ENCODE measurements at regions of chr17 and their contacts with region 1.

Region 1: DNA sequence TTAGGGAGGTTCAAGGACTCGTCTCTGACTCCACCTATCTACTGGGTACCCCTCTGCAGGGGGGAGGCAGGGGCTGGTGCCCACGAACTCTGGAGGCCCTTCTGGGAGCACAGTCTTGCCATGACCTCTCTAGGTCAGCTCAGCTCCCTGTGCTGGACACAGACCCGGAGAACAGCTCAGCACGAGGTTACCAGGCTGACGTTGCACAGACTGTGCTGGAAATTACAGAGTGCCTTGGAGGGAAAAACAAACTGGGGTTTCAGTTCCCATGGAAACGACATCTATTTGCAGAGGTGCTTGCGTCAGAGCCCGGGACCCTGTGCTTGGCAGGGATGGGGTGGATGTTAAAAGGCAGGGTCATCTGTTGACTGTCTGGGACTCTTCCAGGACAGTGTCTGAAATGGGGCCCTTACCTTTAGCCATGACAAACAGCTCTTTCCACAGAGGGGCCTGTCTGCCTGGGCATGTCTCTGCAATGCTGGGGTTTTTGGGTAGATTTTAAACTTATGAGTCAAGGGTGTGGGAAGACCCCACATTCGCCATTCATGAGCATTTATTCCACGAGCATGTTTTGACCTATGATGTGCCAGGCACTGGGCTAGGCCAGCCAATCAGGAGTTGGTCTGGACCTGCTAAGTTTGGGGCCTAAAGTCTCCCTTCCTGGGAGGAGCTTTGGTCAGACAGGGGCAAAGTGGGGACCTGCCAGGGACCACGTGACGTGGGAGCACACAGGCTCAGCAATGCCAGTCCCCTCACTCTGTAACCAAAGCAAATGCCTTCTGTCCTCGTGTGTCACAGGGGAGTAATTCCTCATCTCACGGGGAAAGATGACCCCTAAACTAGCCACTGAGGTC is 22.5 kb downstream of the CCR7 start:
- DNase-seq: peak; percentile 76
- H3K4me3 Mint-ChIP-seq: peak overlapping the region; percentile 56
- H3K27ac Mint-ChIP-seq: peak overlapping the region; percentile 90
- H3K4me1 Mint-ChIP-seq: peaks cover 78% of the 10 kb centered on the region
- H3K27me3 Mint-ChIP-seq: no peaks in the 10 kb centered on the region

Region 2: DNA sequence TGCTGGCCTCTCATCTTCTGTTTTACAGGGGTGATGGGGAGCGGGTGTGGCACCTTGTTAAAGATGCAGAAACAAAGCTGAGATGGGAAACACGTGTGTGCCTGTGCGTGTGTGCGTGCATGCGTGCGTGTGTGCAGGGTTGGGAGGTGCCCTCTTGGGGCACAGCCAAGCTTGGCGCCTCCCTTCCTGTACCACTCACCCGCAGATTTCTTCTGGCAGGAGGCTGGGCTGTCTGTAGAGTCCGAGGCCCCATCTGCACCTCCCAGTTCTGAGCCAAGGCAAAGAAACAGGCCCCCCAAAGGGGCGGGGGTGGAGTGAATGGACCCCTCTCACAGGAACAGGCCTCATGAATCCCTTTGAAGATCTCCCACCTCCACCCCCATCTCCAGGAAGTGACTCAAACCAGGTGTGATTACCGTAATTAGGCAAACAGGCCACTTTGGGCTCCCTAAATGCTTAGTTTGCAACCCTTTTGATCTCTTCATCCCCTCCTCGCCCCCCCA is 62.2 kb before region 1 on chr17:
- CTCF ChIA-PET with region 1: interaction called, 10 read pairs
- POLR2A ChIA-PET with region 1: interaction called, 5 read pairs
- intact Hi-C with region 1: loop called (anchors 2 kb)
- DNase-seq: peak; percentile 95
- H3K4me3 Mint-ChIP-seq: peak overlapping the region; percentile 76
- H3K27ac Mint-ChIP-seq: peak overlapping the region; percentile 98
- H3K4me1 Mint-ChIP-seq: peaks cover 70% of the 10 kb centered on the region
- H3K27me3 Mint-ChIP-seq: no peaks in the 10 kb centered on the region

Region 3: GRCh38 chr17:40615295-40615988 is 72.7 kb after region 1 on chr17:
- CTCF ChIA-PET with region 1: interaction called, 4 read pairs
- POLR2A ChIA-PET with region 1: interaction called, 3 read pairs
- intact Hi-C with region 1: loop called (anchors 2 kb)
- DNase-seq: peak; percentile 57
- H3K4me3 Mint-ChIP-seq: peak overlapping the region; percentile 23
- H3K27ac Mint-ChIP-seq: peak overlapping the region; percentile 79
- H3K4me1 Mint-ChIP-seq: peaks cover 74% of the 10 kb centered on the region
- H3K27me3 Mint-ChIP-seq: no peaks in the 10 kb centered on the region

Region 4: GRCh38 chr17:40671282-40671681 is 128.5 kb after region 1 on chr17:
- CTCF ChIA-PET with region 1: no interaction called
- POLR2A ChIA-PET with region 1: no interaction called
- intact Hi-C with region 1: no loop called
- DNase-seq: no peak
- H3K4me3 Mint-ChIP-seq: no peak overlapping the region
- H3K27ac Mint-ChIP-seq: no peak overlapping the region
- H3K4me1 Mint-ChIP-seq: no peaks in the 10 kb centered on the region
- H3K27me3 Mint-ChIP-seq: peaks cover 10% of the 10 kb centered on the region

Region 5: DNA sequence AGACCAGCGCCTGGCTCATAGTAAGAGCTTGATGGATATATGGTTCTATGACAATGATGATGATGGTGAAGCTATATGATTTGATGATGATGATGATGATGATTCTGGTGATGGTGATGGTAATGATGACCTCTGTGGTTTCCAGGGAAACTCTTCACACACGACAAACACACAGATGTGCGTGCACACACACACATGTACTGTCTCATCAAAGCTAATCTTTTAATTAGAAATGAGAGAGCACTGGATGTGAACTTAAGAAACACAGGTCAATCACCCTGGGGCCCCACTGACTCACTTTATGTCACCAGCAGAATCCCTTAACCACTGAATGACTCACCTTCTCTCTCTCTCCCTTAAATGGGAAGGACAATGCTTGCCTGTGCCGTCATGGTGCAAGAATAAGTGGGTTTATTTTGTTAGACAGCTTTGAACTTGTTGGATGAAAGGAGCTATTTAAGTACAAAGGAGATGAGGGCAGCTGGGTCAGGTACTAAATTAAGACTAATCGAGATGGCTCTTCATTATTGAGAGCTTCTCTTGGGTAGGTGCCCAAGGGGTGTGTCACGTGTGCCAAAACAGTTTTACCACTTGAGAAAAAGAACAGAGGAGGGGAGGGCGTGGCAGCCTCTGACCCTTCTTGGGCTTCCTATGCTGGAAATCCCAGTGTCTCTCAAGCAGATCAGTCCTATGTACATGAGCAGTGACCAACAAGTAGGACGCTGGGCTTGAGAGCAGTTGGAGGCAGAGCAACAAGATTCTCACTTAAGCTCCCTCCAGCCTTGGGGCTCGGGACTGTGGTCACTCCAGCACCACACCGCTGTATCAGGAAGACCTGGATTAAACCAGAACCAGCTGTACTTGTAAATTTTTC is 861.2 kb after region 1 on chr17:
- CTCF ChIA-PET with region 1: no interaction called
- POLR2A ChIA-PET with region 1: no interaction called
- intact Hi-C with region 1: loop called (anchors 5 kb)
- DNase-seq: peak; percentile 84
- H3K4me3 Mint-ChIP-seq: peak overlapping the region; percentile 17
- H3K27ac Mint-ChIP-seq: peak overlapping the region; percentile 86
- H3K4me1 Mint-ChIP-seq: peaks cover 42% of the 10 kb centered on the region
- H3K27me3 Mint-ChIP-seq: no peaks in the 10 kb centered on the region

Measured in activated CD4-positive, alpha-beta memory T cell treated with anti-CD3 and anti-CD28 coated beads for 36 hours (primary cell).